Lower leg skin (tissue), 4 donors: ENCODE measurements at regions of chr12 and their contacts with region 1.

Region 1: GRCh38 chr12:124044809-124045321 is 71.8 kb downstream of the ZNF664 start:
- DNase-seq: no peak
- H3K4me3 ChIP-seq: no peak overlapping the region
- CTCF ChIP-seq: no peak
- POLR2A ChIP-seq: no peak

Region 2: DNA sequence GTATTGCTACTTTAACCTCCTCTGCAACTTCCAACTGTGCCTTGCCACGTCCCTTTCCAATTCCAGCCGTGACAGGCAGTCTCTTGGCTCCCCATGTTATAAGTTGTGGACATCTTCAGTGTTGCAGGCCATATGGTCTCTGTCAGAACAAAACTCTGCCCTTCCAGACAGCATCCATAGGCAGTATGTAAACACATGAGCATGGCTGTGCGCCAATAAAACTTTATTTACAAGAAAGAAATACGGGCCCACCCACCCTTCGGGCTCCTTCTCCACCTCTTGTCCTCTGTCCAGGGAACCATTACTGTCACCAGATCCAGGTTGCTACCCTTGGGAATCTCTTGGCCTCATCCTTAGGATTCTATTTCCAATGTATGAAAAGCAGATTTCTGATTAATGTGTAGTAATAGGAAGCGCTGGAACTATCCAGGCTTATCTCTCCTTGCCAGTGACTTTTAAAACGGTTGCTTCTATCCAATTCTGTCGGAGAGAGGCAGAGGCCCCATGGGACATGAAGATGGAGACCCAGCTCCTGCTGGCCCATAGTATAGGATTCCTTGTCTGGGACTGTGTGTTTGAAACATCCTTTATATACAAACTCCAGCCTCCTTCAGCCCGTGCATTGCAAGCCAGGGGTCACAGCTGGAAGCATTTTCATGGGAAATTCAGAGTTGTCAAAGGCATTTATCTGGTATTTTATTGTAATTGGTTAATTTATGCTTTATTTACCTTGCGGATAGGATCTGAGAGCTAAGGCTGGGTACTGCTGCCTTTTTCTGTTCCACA is 42.6 kb after region 1 on chr12:
- intact Hi-C with region 1: no loop called
- DNase-seq: peak in 1 of 2 donors; percentile 49
- H3K4me3 ChIP-seq: no peak overlapping the region
- CTCF ChIP-seq: no peak
- POLR2A ChIP-seq: no peak

Region 3: DNA sequence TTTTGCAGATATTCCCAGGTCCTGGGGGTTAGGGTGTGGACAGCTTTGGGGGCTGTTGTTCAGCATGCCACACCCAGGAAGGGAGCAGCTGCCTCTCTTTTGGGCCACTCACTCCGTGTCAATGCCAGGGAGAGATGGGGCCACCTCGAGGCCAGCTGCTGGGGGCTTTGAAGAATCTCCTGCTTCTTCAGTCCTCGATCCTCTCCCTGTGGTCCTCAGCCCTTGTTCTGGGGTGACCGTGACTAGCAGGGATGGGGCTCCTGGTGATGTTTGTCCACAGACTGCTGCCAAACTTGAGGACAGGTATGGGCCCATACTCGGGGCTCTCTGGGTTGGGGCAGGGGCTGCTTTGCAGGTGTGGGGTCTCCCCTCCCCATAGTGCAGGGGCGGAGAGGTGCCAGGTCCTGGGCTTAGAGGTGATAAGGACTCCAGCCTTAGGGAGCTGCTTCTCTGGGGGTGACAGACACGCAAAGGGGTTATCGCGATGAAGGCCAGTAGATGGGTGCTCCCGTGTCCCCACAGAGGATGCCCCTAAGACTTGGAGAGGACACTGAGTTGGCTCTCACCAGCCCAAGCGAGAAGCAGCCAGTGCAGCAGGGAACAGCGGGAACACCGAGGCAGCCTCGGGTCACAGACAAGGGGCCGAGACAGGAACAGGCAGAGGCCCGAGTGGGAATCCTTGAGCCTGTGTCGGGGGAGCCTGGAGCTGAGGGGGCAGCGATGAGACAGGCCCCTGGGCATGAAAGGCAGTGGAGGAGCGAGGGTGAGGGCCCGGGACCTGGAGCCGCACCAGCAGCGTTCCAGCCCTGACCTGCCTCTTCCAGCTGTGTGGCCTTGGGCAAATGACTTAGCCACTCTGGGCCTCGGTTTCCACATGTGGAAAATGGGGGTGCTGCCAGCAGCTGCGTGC is 261.2 kb after region 1 on chr12:
- intact Hi-C with region 1: loop called (anchors 5 kb)
- DNase-seq: no peak
- H3K4me3 ChIP-seq: no peak overlapping the region
- CTCF ChIP-seq: no peak
- POLR2A ChIP-seq: no peak